PC-9 (cell line): ENCODE measurements at regions of chr10 and their contacts with region 1.

Region 1: GRCh38 chr10:93916257-93917063 is 22.7 kb downstream of the SLC35G1 start:
- DNase-seq: no peak
- H3K4me3 ChIP-seq: no peak overlapping the region
- H3K27ac ChIP-seq: no peak overlapping the region
- H3K4me1 ChIP-seq: no peaks in the 10 kb centered on the region
- H3K27me3 ChIP-seq: no peaks in the 10 kb centered on the region
- CTCF ChIP-seq: peak; percentile 66

Region 2: DNA sequence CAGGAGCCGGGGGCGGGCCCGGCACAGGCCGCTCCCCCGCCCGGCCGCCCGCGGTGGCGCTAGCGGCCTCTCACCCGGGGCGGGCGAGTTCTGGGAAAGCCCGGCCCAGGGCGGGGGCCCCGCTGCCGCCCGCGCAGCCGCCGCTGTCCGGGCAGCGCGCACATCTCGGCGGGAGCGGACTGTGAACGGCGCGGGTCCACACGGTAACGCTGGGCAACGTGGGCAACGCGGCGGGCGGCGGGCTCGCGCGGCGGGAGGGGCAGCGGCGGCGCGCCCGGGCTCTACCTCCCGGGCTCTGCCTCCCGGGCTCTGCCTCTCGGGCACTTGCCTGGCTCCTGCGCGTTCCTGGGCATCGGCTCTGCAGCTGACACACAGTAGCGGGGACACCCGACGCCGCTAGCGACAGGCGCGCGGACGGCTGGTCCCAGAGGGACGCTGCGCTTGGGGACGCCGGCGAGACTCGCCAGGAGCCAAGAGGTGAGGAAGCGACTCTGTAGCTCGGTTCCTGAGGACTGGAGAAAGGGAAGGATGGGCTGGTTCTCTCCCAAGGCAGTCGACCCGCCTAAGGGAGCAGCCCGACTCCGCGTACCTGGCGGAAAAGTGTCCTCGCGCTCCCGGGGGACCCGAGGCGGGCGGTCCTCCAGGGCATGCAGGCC is 77.5 kb after region 1 on chr10 and contains the start of gene PLCE1:
- CTCF ChIA-PET with region 1: no interaction called
- POLR2A ChIA-PET with region 1: no interaction called
- intact Hi-C with region 1: loop called (anchors 10 kb)
- DNase-seq: peak; percentile 42 to 65
- H3K4me3 ChIP-seq: peak within 1 kb of the TSS; percentile 79
- H3K27ac ChIP-seq: no peak within 1 kb of the TSS; the same call in 1 of the 2 replicates
- H3K4me1 ChIP-seq: peaks cover 56% of the 10 kb centered on the region
- H3K27me3 ChIP-seq: no peaks in the 10 kb centered on the region
- CTCF ChIP-seq: no peak
- total RNA-seq, gene PLCE1: 14.8 and 15.2 TPM in 2 replicates

Region 3: GRCh38 chr10:94232709-94233383 is 316.4 kb after region 1 on chr10:
- CTCF ChIA-PET with region 1: no interaction called
- POLR2A ChIA-PET with region 1: no interaction called
- intact Hi-C with region 1: loop called (anchors 10 kb)
- DNase-seq: no peak
- H3K4me3 ChIP-seq: no peak overlapping the region
- H3K27ac ChIP-seq: no peak overlapping the region
- H3K4me1 ChIP-seq: no peaks in the 10 kb centered on the region
- H3K27me3 ChIP-seq: no peaks in the 10 kb centered on the region
- CTCF ChIP-seq: no peak

Region 4: DNA sequence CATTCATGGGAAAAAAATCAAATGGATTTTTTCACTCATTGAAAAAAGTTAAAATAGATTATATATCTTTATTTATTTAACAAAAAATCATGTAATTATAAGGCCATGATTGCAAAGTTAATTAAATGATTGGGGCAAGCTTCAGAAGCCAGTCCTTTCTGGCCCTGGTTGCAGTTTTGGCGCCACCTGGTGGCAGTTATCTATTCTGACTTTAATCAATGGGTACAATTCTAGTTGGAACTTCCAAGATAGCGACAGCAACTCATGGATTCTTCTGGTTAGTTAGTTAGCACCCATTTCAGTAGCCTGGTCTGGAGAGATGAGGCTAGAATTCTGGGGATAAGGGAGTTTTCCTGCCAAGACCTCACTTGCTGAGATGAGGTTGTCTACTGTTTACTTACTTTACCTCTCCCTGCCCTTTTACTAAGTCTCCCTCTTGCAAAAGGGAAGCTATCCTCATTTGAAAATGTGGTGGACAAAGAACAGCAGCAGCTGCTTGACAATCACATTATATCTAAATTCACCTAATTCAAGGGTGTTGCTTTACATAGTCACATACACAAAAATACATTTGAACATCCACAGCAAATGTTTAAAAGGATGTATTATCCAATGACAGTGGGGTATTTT is 403.9 kb after region 1 on chr10:
- CTCF ChIA-PET with region 1: interaction called, 7 read pairs
- POLR2A ChIA-PET with region 1: no interaction called
- intact Hi-C with region 1: loop called (anchors 1 kb)
- DNase-seq: peak; percentile 14 to 33
- H3K4me3 ChIP-seq: no peak overlapping the region
- H3K27ac ChIP-seq: no peak overlapping the region
- H3K4me1 ChIP-seq: no peaks in the 10 kb centered on the region
- H3K27me3 ChIP-seq: no peaks in the 10 kb centered on the region
- CTCF ChIP-seq: peak; percentile 85